Activated naive CD4-positive, alpha-beta T cell treated with anti-CD3 and anti-CD28 coated beads for 36 hours (primary cell): ENCODE measurements at regions of chr17 and their contacts with region 1.

Region 1: GRCh38 chr17:76219670-76220383 is 20.5 kb downstream of the RNF157 start:
- DNase-seq: no peak
- H3K4me3 Mint-ChIP-seq: peak overlapping the region; percentile 24
- H3K27ac Mint-ChIP-seq: peak overlapping the region; percentile 44
- H3K4me1 Mint-ChIP-seq: peaks cover 58% of the 10 kb centered on the region
- H3K27me3 Mint-ChIP-seq: no peaks in the 10 kb centered on the region

Region 2: GRCh38 chr17:76199469-76199868 is 20.4 kb before region 1 on chr17:
- CTCF ChIA-PET with region 1: interaction called, 5 read pairs
- intact Hi-C with region 1: loop called (anchors 1 kb)
- DNase-seq: peak; percentile 87
- H3K4me3 Mint-ChIP-seq: no peak overlapping the region
- H3K27ac Mint-ChIP-seq: peak overlapping the region; percentile 91
- H3K4me1 Mint-ChIP-seq: peaks cover 74% of the 10 kb centered on the region
- H3K27me3 Mint-ChIP-seq: no peaks in the 10 kb centered on the region

Region 3: DNA sequence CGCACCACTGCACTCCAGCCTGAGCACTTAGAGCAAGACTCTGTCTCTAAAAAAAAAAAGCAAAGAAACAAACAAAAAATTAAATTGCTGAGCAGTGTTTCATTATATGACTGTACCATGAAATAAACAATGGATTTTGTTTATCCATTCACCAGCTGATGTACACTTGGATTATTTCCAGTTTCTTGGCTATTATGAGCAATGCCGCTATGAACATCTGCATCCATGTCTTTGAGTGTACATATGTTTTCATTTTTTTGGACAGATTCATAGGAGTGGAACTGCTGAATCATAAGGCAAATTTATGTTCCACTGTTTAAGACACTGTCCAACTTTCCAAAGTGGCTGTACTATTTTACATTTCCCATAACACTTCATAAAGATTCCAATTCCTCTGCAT is 12.5 kb after region 1 on chr17:
- CTCF ChIA-PET with region 1: interaction called, 3 read pairs
- intact Hi-C with region 1: loop called (anchors 1 kb)
- DNase-seq: no peak
- H3K4me3 Mint-ChIP-seq: no peak overlapping the region
- H3K27ac Mint-ChIP-seq: no peak overlapping the region
- H3K4me1 Mint-ChIP-seq: peaks cover 55% of the 10 kb centered on the region
- H3K27me3 Mint-ChIP-seq: no peaks in the 10 kb centered on the region

Region 4: DNA sequence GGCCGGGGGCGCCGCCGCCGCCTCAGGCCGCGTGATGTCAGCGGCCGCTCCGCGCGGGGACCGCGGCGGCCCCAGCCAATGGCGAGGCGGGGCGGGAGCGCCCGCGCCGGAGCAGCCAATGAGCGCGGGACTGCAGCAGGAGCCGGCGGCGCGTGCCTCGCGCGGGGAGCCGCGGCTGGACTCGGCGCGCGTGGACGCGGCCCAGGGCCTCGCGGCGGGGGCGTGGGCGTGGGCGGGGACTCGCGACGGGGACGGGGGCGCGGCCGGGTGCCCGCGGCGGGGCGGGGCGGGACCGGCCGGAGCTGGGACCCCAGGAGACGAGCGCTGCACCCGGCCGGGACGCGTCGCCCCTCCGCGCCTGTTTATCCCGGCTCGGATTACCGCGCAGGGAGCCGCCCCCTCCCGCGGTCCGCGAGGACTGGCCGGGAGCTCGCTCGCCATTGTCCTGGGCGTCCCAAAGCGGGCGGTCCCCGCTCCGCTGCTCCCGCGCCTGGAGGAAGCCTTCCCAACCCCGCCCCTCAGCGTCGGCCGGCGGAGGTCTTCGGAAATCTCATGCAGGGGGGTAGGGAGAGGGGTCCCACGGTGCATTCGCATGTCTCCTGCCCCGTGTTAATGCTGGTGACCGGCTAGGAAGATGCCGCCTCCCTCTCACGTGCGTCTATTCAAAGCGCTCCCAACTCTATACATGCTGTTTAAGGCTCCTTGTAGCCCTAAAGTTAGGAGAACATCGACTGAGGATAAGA is 20.8 kb after region 1 on chr17 and contains the start of gene RNF157:
- CTCF ChIA-PET with region 1: interaction called, 9 read pairs
- intact Hi-C with region 1: loop called (anchors 2 kb)
- DNase-seq: peak; percentile 53
- H3K4me3 Mint-ChIP-seq: peak within 1 kb of the TSS; percentile 78
- H3K27ac Mint-ChIP-seq: peak within 1 kb of the TSS; percentile 75
- H3K4me1 Mint-ChIP-seq: peaks cover 75% of the 10 kb centered on the region
- H3K27me3 Mint-ChIP-seq: no peaks in the 10 kb centered on the region
- total RNA-seq, gene RNF157: 38.1 to 45.3 TPM

Region 5: DNA sequence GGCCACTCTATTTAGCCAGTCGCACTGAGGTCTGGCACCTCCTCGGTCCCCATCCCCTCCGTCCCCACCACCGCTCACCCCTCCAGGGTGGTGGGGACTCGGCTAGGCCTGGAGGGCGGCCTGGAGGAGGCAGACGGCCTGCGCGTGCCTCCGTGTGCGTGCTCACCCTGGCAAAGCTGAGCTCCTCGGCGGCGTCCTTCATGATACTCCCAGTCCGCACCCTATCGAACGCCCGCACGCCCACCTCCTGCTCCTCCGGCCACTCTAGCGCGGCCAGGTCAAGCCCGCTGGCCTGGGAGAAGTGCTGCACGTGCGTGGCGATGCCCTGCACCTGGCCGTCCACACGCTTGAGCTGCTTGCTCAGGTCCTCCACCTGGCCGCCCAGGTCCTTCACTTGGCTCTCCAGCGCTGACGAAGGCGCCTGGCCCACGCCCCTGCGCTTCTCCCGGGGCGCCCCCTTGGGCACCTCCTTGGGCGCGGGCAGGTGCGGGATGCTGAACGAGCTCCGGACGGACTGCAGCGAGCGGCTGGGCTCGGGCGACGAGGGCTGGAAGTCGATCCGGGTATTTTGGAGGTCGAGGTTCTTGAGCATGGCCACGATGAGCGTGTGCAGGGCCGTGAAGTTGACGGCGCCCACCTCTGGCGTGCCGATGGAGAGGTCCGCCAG is 87.6 kb after region 1 on chr17:
- CTCF ChIA-PET with region 1: no interaction called
- intact Hi-C with region 1: no loop called
- DNase-seq: no peak
- H3K4me3 Mint-ChIP-seq: no peak overlapping the region
- H3K27ac Mint-ChIP-seq: no peak overlapping the region
- H3K4me1 Mint-ChIP-seq: no peaks in the 10 kb centered on the region
- H3K27me3 Mint-ChIP-seq: no peaks in the 10 kb centered on the region

Region 6: GRCh38 chr17:76382803-76383545 is 163.1 kb after region 1 on chr17:
- CTCF ChIA-PET with region 1: no interaction called
- intact Hi-C with region 1: no loop called
- DNase-seq: peak; percentile 78
- H3K4me3 Mint-ChIP-seq: peak overlapping the region; percentile 83
- H3K27ac Mint-ChIP-seq: peak overlapping the region; percentile 79
- H3K4me1 Mint-ChIP-seq: peaks cover 6% of the 10 kb centered on the region
- H3K27me3 Mint-ChIP-seq: no peaks in the 10 kb centered on the region